ENCODE measurements at regions of chr13 and their contacts with region 1.

Region 1: GRCh38 chr13:112711528-112712265 is 21.9 kb downstream of the ATP11A start:
- DNase-seq: peak; percentile 95
- H3K4me3 ChIP-seq: peak overlapping the region in 3 of 4 donors; percentile 3 to 35 (median 27)
- H3K27ac ChIP-seq: peak overlapping the region; percentile 68 to 89 (median 85)
- H3K4me1 ChIP-seq: peaks cover 0 to 34% (median 22%) of the 10 kb centered on the region in 4 donors
- H3K27me3 ChIP-seq: no peaks in the 10 kb centered on the region
- CTCF ChIP-seq: no peak
- EP300 ChIP-seq: peak in 2 of 4 donors; percentile 34 to 43
- POLR2A ChIP-seq: no peak

Region 2: GRCh38 chr13:112652512-112653070 is 59.1 kb before region 1 on chr13:
- intact Hi-C with region 1: loop called (anchors 5 kb)
- DNase-seq: no peak
- H3K4me3 ChIP-seq: no peak overlapping the region
- H3K27ac ChIP-seq: peak overlapping the region in 3 of 4 donors; percentile 25 to 68 (median 65)
- H3K4me1 ChIP-seq: peaks cover 0 to 31% (median 25%) of the 10 kb centered on the region in 4 donors
- H3K27me3 ChIP-seq: no peaks in the 10 kb centered on the region
- CTCF ChIP-seq: no peak
- EP300 ChIP-seq: no peak
- POLR2A ChIP-seq: no peak

Region 3: DNA sequence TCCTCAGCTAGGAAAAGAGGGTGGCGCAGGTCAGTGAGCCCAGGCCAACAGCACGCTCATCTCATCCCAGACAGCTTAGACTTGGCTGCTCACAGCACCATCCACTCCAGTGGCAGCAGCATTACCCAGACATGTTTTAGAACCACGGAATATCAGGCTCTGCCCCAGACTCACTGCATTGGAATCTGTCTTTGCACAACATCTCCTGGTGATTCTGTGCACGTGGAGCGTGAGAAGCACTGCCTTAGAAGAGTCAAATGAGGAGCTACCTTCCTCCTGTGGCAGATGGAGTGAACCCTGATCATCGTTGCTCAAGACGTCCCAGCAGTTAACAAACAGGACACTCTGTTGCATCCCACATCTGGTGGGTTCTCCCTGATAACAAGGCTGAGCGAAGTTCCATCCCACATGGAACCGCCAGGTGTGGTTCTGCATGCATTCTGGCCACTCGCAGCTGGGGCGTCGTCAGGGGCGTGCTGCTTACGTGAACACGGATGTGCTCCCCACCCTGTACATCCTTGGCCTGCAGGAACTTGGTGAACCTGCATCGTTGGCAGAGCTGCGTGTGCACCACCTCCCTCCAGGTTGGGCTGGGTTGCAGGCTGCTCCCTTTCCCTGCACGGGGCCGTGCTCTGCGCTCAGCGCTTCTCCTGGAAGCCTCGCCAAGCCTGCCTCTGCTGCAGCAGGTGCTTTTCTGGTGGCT is 47.0 kb before region 1 on chr13:
- intact Hi-C with region 1: no loop called
- DNase-seq: no peak
- H3K4me3 ChIP-seq: no peak overlapping the region
- H3K27ac ChIP-seq: no peak overlapping the region
- H3K4me1 ChIP-seq: no peaks in the 10 kb centered on the region
- H3K27me3 ChIP-seq: no peaks in the 10 kb centered on the region
- CTCF ChIP-seq: no peak
- EP300 ChIP-seq: no peak
- POLR2A ChIP-seq: no peak

Region 4: DNA sequence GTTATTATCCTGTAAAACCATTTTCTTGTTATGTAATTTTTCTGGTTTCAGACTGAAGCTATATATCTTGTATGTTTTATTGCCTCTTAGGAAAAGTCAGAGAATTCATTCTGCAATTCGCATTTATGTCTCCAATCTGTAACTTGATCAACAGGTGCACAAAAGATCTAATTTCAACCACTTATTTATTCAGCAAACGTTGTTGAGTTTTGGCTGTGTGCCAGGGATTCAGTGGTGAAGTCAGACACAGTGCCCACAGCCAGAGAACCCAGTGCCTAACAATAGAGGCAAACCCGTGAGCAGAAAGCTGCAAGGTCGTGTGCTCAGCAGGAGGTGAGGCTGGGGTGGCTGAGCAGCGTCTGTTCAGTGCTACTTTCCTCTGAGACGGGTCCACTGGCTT is 137.8 kb after region 1 on chr13:
- intact Hi-C with region 1: loop called (anchors 10 kb)
- DNase-seq: peak; percentile 46
- H3K4me3 ChIP-seq: no peak overlapping the region
- H3K27ac ChIP-seq: no peak overlapping the region
- H3K4me1 ChIP-seq: peaks cover 0 to 1% (median 0%) of the 10 kb centered on the region in 4 donors
- H3K27me3 ChIP-seq: no peaks in the 10 kb centered on the region
- CTCF ChIP-seq: no peak
- EP300 ChIP-seq: no peak
- POLR2A ChIP-seq: no peak